CD4-positive, alpha-beta T cell (primary cell): ENCODE measurements at regions of chr1 and their contacts with region 1.

Region 1: GRCh38 chr1:236603991-236604904 is at the start of gene HEATR1:
- DNase-seq: peak; percentile 67 to 92 (median 80)
- ATAC-seq: peak; percentile 81
- H3K4me3 ChIP-seq: peak within 1 kb of the TSS; percentile 82
- H3K4me3 Mint-ChIP-seq: peak within 1 kb of the TSS; percentile 98
- H3K27ac ChIP-seq: peak within 1 kb of the TSS in 1 of 2 donors; percentile 65
- H3K27ac Mint-ChIP-seq: peak within 1 kb of the TSS; percentile 96
- H3K4me1 ChIP-seq: peaks cover 14% of the 10 kb centered on the region
- H3K4me1 Mint-ChIP-seq: peaks cover 44% of the 10 kb centered on the region
- H3K27me3 ChIP-seq: peaks cover 13 to 14% of the 10 kb centered on the region in 2 experiments
- H3K27me3 Mint-ChIP-seq: peaks cover 18% of the 10 kb centered on the region
- CTCF ChIP-seq: no peak
- total RNA-seq, gene HEATR1: 34.9 to 37.5 TPM

Region 2: GRCh38 chr1:236523701-236524141 is 80.5 kb before region 1 on chr1 and contains the start of gene LGALS8:
- CTCF ChIA-PET with region 1: no interaction called
- POLR2A ChIA-PET with region 1: interaction called, 4 read pairs
- intact Hi-C with region 1: loop called (anchors 5 to 10 kb)
- DNase-seq: peak; percentile 73 to 92 (median 83)
- ATAC-seq: peak; percentile 80
- H3K4me3 ChIP-seq: peak within 1 kb of the TSS; percentile 82
- H3K4me3 Mint-ChIP-seq: peak within 1 kb of the TSS; percentile 99
- H3K27ac ChIP-seq: peak within 1 kb of the TSS; percentile 82 to 85
- H3K27ac Mint-ChIP-seq: peak within 1 kb of the TSS; percentile 97
- H3K4me1 ChIP-seq: peaks cover 12% of the 10 kb centered on the region
- H3K4me1 Mint-ChIP-seq: peaks cover 40% of the 10 kb centered on the region
- H3K27me3 ChIP-seq: no peaks in the 10 kb centered on the region
- H3K27me3 Mint-ChIP-seq: no peaks in the 10 kb centered on the region
- CTCF ChIP-seq: no peak
- total RNA-seq, gene LGALS8: 138 to 144 TPM

Region 3: DNA sequence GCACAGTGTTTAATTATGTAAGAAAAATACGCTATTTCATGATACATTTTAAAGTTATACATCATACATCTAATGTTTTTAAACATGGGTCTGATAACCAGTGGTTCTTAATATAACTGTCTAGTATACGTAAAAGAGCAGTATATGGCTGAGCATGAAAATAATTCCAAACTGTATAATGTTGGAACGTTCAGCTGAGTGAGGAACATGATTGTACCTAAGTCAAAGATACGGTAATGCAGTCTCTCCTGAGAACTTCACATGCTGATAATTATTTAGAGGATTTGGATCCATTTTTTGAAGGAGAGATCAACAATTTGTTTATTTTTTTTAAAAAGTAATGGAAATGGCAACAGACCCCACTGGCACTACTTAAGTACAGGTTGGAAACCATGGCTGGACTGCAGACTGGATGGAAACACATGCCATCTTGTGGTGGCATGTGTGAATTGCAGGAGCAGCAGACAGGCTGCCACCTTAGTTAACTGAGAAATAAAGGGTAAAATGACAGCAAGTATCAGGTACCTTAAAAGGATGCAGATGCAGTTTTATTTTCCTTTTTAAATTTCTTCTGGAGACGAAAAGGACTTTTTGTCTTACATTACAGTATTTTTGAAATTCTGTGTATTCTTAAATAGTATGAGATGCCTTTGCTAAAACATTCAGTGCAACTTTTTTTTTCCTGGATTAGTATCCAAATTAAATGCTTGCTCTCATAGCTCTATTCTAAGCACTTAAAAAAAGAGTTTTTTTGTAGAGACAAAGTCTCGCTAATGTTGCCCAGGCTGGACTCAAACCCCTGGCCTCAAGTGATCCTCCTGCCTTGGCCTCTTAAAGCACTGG is 264.6 kb after region 1 on chr1:
- CTCF ChIA-PET with region 1: no interaction called
- POLR2A ChIA-PET with region 1: no interaction called
- intact Hi-C with region 1: loop called in 1 of 2 experiments (anchors 5 kb)
- DNase-seq: peak in 13 of 14 experiments; percentile 7 to 76 (median 25)
- ATAC-seq: peak; percentile 51
- H3K4me3 ChIP-seq: no peak overlapping the region
- H3K4me3 Mint-ChIP-seq: no peak overlapping the region
- H3K27ac ChIP-seq: no peak overlapping the region
- H3K27ac Mint-ChIP-seq: no peak overlapping the region
- H3K4me1 ChIP-seq: no peaks in the 10 kb centered on the region
- H3K4me1 Mint-ChIP-seq: no peaks in the 10 kb centered on the region
- H3K27me3 ChIP-seq: no peaks in the 10 kb centered on the region
- H3K27me3 Mint-ChIP-seq: no peaks in the 10 kb centered on the region
- CTCF ChIP-seq: peak; percentile 96